PC-3 (cell line): ENCODE measurements at regions of chr6 and their contacts with region 1.

Region 1: GRCh38 chr6:132962936-132963868 is 148.8 kb downstream of the RPS12 start:
- DNase-seq: peak; percentile 80
- ATAC-seq: 0 out of 2 replicates have a peak, but pooled peaks have one; percentile 19
- H3K4me3 ChIP-seq: no peak overlapping the region
- H3K27ac ChIP-seq: peak overlapping the region; percentile 79
- H3K4me1 ChIP-seq: peaks cover 72% of the 10 kb centered on the region
- H3K27me3 ChIP-seq: no peaks in the 10 kb centered on the region
- CTCF ChIP-seq: peak; percentile 92

Region 2: DNA sequence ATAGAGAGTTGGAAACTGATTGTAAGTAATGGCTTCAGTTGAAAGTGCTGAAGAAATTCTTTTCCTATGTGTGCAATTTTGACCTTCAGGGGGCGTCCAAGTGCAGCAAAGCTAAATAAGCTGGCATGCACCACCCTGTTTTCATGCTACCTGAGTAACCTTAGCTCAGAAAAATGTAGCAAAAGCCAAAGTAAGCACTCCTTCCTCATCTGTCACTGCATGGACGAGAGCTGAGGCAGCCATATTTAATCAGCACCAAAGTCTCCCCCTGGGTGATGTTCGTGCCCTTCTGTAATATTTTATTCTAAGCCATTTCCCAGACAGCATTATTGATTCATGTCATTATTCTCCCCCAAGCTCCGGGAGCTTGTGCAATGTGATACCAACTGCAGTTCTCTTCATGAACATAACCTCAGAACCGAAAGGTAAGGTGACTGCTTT is 25.7 kb before region 1 on chr6:
- CTCF ChIA-PET with region 1: interaction called, 9 read pairs
- POLR2A ChIA-PET with region 1: no interaction called
- intact Hi-C with region 1: loop called (anchors 1 kb)
- DNase-seq: peak; percentile 83
- ATAC-seq: peak; percentile 68
- H3K4me3 ChIP-seq: no peak overlapping the region
- H3K27ac ChIP-seq: no peak overlapping the region
- H3K4me1 ChIP-seq: peaks cover 9% of the 10 kb centered on the region
- H3K27me3 ChIP-seq: no peaks in the 10 kb centered on the region
- CTCF ChIP-seq: peak; percentile 75

Region 3: DNA sequence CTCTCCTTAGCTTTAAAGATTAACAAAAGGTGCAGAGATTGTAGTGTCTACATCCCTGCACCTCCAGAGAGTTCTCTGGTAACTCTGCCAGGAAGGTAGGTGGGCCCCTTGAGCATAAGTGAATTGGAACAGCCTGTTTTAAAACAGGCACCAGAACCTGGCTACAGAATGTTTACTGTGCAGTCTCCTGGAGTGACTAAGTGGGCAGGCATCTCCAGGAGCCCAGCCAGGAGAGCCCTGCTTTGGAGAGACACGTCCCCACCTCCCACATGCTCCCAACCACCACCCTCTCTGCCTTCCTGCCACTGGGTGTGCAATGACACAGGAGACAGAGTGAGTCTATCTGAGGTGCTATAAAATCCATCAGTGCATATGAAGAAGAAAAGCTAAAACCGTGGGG is 167.7 kb after region 1 on chr6:
- CTCF ChIA-PET with region 1: no interaction called
- POLR2A ChIA-PET with region 1: no interaction called
- intact Hi-C with region 1: loop called (anchors 2 kb)
- DNase-seq: peak; percentile 95
- ATAC-seq: peak; percentile 98
- H3K4me3 ChIP-seq: no peak overlapping the region
- H3K27ac ChIP-seq: peak overlapping the region; percentile 69
- H3K4me1 ChIP-seq: peaks cover 27% of the 10 kb centered on the region
- H3K27me3 ChIP-seq: no peaks in the 10 kb centered on the region
- CTCF ChIP-seq: peak; percentile 41; the same call in 1 of the 2 replicates

Region 4: GRCh38 chr6:133184798-133185372 is 221.7 kb after region 1 on chr6:
- CTCF ChIA-PET with region 1: no interaction called
- POLR2A ChIA-PET with region 1: no interaction called
- intact Hi-C with region 1: loop called (anchors 5 kb)
- DNase-seq: peak; percentile 57
- ATAC-seq: 0 out of 2 replicates have a peak, but pooled peaks have one; percentile 20
- H3K4me3 ChIP-seq: no peak overlapping the region
- H3K27ac ChIP-seq: no peak overlapping the region
- H3K4me1 ChIP-seq: peaks cover 4% of the 10 kb centered on the region
- H3K27me3 ChIP-seq: no peaks in the 10 kb centered on the region
- CTCF ChIP-seq: peak; percentile 71

Region 5: GRCh38 chr6:133512410-133513016 is 549.3 kb after region 1 on chr6:
- CTCF ChIA-PET with region 1: no interaction called
- POLR2A ChIA-PET with region 1: no interaction called
- intact Hi-C with region 1: loop called (anchors 2 kb)
- DNase-seq: peak; percentile 70
- ATAC-seq: 0 out of 2 replicates have a peak, but pooled peaks have one; percentile 42
- H3K4me3 ChIP-seq: no peak overlapping the region
- H3K27ac ChIP-seq: no peak overlapping the region
- H3K4me1 ChIP-seq: no peaks in the 10 kb centered on the region
- H3K27me3 ChIP-seq: no peaks in the 10 kb centered on the region
- CTCF ChIP-seq: peak; percentile 74